ENCODE measurements at regions of chr19 and their contacts with region 1.

Region 1: GRCh38 chr19:6767357-6768235 is at the start of gene SH2D3A:
- DNase-seq: peak; percentile 98
- H3K4me3 Mint-ChIP-seq: peak within 1 kb of the TSS; percentile 94
- H3K27ac Mint-ChIP-seq: peak within 1 kb of the TSS; percentile 91
- H3K4me1 Mint-ChIP-seq: peaks cover 39% of the 10 kb centered on the region
- H3K27me3 Mint-ChIP-seq: no peaks in the 10 kb centered on the region
- total RNA-seq, gene SH2D3A: 23.2 to 24.9 TPM

Region 2: GRCh38 chr19:6753178-6754031 is 14.2 kb before region 1 on chr19:
- CTCF ChIA-PET with region 1: no interaction called
- intact Hi-C with region 1: loop called (anchors 1 kb)
- DNase-seq: peak; percentile 90
- H3K4me3 Mint-ChIP-seq: peak overlapping the region; percentile 65
- H3K27ac Mint-ChIP-seq: peak overlapping the region; percentile 74
- H3K4me1 Mint-ChIP-seq: peaks cover 12% of the 10 kb centered on the region
- H3K27me3 Mint-ChIP-seq: no peaks in the 10 kb centered on the region